ENCODE measurements at regions of chr14 and their contacts with region 1.

Region 1: DNA sequence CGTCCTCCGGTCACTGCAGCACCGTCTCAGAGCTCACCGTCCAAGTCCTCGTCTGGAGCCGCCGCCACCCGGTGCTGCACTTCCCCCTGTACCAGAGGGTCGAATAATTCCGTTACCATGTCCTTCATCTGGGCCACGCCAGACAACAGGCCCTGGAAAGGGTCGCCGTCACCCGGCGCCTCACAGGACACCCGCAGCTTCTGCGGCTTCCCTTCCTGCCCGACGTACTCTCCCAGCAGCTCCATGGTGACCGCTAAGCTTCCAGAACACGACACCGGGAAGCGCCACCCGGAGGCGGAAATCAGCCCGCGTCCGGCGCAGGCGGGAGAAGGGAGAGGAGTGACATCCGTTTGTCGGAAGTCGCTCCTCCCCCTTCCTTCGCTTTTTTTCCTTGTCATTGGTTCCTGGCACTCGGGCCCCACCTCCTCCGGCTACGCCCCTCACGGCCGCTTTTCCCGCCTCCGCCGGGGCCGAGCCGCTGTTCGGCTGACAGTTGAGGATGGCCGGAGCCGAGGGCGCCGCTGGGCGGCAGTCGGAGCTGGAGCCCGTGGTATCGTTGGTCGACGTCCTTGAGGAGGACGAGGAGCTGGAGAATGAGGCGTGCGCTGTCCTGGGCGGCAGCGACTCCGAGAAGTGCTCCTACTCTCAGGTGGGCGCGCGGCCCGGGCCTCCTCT is at the starts of genes GON7 and UBR7:
- DNase-seq: peak; percentile 97
- ATAC-seq: peak; percentile 90
- H3K4me3 ChIP-seq: peak within 1 kb of the TSS; percentile 78
- H3K27ac ChIP-seq: peak within 1 kb of the TSS; percentile 62
- H3K4me1 ChIP-seq: peaks cover 17% of the 10 kb centered on the region; the same call in 1 of the 2 replicates
- H3K27me3 ChIP-seq: no peaks in the 10 kb centered on the region
- CTCF ChIP-seq: no peak
- total RNA-seq, gene GON7: 33.5 and 45.4 TPM in 2 replicates
- total RNA-seq, gene UBR7: 61.1 and 61.3 TPM in 2 replicates

Region 2: GRCh38 chr14:93184388-93185353 is 22.3 kb before region 1 on chr14 and contains the starts of genes LYSET and MOAP1:
- CTCF ChIA-PET with region 1: no interaction called
- POLR2A ChIA-PET with region 1: interaction called, 5 read pairs
- intact Hi-C with region 1: loop called (anchors 2 kb)
- DNase-seq: peak; percentile 81
- ATAC-seq: peak; percentile 83
- H3K4me3 ChIP-seq: peak within 1 kb of the TSS; percentile 93
- H3K27ac ChIP-seq: peak within 1 kb of the TSS; percentile 62
- H3K4me1 ChIP-seq: peaks cover 21% of the 10 kb centered on the region
- H3K27me3 ChIP-seq: no peaks in the 10 kb centered on the region
- CTCF ChIP-seq: no peak
- total RNA-seq, gene LYSET: 6.9 and 11.5 TPM in 2 replicates
- total RNA-seq, gene MOAP1: 10.3 and 15.6 TPM in 2 replicates

Region 3: DNA sequence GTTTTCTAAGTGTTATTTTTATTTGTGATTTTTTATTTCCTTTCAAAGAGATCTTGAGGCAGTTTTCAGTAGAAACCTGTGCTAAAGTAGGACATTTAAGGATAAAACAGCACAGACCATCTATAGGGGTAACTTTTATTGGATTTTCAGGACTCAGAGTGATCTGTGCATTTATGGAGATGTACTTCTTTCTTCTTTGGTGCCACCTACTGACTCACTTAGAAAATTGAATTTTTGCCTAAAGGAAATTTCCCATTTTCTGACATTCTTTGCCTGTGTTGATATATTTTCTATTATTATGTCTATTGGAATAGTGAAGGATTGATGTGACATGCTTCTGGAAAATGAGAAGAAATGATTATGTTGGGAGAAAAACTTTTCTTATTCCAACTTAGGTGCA is 336.8 kb after region 1 on chr14:
- CTCF ChIA-PET with region 1: no interaction called
- POLR2A ChIA-PET with region 1: no interaction called
- intact Hi-C with region 1: loop called (anchors 1 kb)
- DNase-seq: peak; percentile 53
- ATAC-seq: peak; percentile 60; the same call in 1 of the 2 replicates
- H3K4me3 ChIP-seq: no peak overlapping the region
- H3K27ac ChIP-seq: no peak overlapping the region
- H3K4me1 ChIP-seq: no peaks in the 10 kb centered on the region
- H3K27me3 ChIP-seq: peaks cover 49% of the 10 kb centered on the region
- CTCF ChIP-seq: peak; percentile 63

Region 4: DNA sequence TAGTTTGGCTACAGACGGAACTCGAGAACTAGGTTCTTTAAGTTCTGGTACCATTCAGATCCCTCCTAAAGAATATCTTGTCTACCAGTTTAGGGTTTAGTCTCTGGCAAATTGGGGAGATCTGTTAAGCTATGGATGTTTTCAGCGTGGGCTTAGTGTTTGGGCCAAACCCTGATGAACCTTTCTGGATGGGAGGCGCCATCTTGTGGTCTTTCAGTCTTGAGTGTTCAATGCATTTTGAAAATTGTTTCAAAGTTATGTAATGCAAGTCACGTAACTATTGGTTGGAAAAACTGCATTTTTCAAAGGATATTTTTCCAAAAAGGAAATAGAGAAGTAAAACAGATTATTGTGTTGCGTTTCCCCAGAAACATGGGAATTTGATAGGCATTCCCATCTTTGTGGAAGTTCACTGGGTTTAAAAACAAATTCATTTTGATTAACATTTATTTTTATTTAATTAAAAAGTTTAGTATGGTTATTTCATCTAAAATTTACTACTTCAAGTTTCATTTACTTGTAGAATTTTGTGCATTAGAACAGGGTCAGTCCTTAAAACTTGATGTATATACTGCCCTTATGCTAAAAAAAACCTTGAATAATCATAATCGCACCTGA is 412.4 kb after region 1 on chr14:
- CTCF ChIA-PET with region 1: no interaction called
- POLR2A ChIA-PET with region 1: no interaction called
- intact Hi-C with region 1: loop called (anchors 5 kb)
- DNase-seq: peak; percentile 68
- ATAC-seq: peak; percentile 65; the same call in 1 of the 2 replicates
- H3K4me3 ChIP-seq: no peak overlapping the region
- H3K27ac ChIP-seq: no peak overlapping the region
- H3K4me1 ChIP-seq: no peaks in the 10 kb centered on the region
- H3K27me3 ChIP-seq: peaks cover 57% of the 10 kb centered on the region
- CTCF ChIP-seq: peak; percentile 82

Measured in PC-3 (cell line).